Dendritic cell treated with granulocyte-macrophage colony-stimulating factor and Interleukin-4, amounts not matched to agents 40 ng/mL and 50 ng/mL, for 4 days (primary cell): ENCODE measurements at regions of chr13 and their contacts with region 1.

Region 1: DNA sequence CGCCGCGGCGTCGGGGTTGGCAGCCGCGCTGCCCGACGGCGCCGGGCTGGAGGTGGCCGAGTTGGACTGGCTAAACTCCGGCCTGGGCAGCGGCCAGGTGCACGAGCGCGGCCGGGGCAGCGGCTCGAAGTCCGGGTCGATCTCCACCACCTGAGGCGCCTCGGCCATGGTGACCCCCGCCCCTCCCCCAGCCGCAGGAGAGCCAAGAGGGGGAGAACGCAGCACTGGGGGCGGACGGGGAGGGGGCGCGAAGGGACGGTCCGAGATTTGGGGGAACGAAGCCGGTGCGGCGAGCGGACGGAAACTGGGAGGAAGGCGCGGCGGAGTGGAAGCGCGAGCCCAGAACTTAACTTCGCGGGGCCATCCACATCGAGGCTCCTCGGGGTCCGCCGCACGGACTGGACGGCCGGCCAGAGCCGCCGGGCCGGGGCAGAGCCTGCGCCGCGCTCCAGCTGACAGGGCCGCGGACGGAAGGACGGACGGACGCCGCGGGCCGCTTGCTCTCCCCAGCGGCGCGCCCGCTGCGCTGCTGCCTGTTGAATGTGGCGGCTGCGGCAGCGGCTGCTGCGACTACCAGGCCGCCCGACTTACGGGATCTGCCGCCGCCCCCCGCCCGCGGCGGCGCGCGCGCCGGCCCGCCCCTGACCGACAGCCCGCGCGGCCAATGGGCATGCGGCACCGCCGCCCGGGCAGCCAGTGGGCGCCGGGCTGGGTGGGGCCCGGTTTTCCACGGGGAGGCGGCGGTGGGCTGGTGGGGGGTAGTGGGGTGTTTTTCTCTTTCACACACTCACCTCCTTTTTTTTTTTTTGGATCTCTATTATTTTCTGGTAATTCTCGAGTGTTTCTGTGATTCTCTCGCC is at the start of gene FOXO1:
- H3K4me3 Mint-ChIP-seq: peak within 1 kb of the TSS; percentile 96
- H3K27ac Mint-ChIP-seq: peak within 1 kb of the TSS; percentile 99
- H3K4me1 Mint-ChIP-seq: peaks cover 44% of the 10 kb centered on the region
- H3K27me3 Mint-ChIP-seq: no peaks in the 10 kb centered on the region

Region 2: GRCh38 chr13:40377783-40378182 is 288.5 kb before region 1 on chr13:
- intact Hi-C with region 1: no loop called
- H3K4me3 Mint-ChIP-seq: no peak overlapping the region
- H3K27ac Mint-ChIP-seq: no peak overlapping the region
- H3K4me1 Mint-ChIP-seq: peaks cover 22% of the 10 kb centered on the region
- H3K27me3 Mint-ChIP-seq: peaks cover 22% of the 10 kb centered on the region

Region 3: DNA sequence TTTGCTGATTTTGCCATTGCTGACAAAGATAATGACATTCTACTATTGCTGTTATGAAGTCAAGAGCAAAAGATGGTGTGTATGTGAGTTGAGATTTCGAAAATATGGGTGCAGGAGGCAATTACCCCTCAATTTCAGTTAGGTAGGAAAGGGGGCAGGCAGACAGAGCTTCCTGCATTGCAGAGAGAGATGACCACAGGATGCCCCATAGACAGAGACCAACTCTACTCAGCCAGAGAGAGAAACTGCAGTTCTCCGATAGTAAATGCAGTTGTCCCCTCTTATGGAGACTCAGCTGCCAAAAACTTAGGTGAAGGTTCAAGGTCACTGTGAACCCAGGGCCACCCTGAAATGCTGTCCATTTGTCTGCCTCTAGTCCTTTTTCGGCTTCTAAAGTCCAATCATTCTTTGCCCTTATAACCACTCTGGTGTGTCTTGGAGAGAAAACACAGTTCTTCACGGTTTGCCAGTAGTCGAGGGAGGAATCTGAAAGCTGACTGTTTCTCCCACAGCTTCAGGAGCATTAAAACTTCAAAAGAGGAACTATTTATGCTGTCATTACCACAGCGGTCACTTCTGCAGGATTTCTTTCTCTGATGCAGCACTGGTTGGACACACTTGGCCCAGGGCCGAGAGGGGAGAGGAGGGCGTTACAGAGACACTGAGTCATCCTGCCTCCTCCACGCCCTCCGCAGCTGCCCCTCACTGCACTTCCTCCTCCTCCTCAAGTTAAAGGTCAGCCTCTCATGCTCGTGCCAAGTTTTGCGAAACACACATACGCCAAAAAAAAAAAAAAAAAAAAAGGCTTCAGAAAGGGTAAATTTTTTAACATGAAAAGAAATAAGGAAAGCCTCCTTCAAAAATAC is 264.1 kb before region 1 on chr13:
- intact Hi-C with region 1: loop called (anchors 2 kb)
- H3K4me3 Mint-ChIP-seq: no peak overlapping the region
- H3K27ac Mint-ChIP-seq: peak overlapping the region; percentile 21
- H3K4me1 Mint-ChIP-seq: peaks cover 72% of the 10 kb centered on the region
- H3K27me3 Mint-ChIP-seq: no peaks in the 10 kb centered on the region

Region 4: DNA sequence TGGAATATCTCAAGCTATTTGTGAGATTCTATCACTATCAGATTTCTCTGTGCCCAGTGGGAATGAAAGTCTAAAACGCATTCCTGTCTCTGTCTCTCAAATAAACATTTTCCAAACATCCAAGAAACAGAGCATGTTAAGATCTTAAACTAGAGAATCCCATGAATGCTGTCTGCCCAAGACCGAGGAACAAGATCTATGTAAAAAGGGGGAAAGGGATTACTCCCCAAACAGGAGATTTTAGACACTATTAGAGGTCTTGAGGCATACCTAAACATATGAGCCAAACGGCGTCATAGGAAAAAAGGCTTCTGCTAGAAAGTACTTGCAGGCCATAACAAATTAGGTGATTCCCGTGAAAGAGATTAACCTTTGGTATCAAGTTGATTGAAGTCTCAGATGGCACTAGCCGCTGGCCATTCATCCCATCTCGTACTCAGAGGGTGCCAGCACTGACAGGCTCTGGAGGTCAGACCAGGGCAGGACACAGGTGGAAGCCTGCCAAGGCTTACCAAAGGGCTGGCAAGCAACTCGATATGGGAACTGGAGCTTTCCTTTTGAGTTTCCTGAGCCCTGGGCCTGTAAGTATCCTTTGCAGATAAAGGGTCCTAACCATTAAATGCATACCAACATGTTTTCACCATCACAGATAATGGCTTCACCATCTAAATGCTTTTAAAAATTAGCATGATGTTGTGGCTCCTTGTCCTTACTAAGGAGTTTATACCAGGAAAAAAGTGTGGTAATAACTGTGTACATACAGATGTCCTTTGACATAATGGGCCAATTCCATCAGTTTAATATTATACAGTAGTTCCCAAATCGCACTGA is 225.1 kb before region 1 on chr13:
- intact Hi-C with region 1: no loop called
- H3K4me3 Mint-ChIP-seq: no peak overlapping the region
- H3K27ac Mint-ChIP-seq: no peak overlapping the region
- H3K4me1 Mint-ChIP-seq: peaks cover 35% of the 10 kb centered on the region
- H3K27me3 Mint-ChIP-seq: no peaks in the 10 kb centered on the region

Region 5: DNA sequence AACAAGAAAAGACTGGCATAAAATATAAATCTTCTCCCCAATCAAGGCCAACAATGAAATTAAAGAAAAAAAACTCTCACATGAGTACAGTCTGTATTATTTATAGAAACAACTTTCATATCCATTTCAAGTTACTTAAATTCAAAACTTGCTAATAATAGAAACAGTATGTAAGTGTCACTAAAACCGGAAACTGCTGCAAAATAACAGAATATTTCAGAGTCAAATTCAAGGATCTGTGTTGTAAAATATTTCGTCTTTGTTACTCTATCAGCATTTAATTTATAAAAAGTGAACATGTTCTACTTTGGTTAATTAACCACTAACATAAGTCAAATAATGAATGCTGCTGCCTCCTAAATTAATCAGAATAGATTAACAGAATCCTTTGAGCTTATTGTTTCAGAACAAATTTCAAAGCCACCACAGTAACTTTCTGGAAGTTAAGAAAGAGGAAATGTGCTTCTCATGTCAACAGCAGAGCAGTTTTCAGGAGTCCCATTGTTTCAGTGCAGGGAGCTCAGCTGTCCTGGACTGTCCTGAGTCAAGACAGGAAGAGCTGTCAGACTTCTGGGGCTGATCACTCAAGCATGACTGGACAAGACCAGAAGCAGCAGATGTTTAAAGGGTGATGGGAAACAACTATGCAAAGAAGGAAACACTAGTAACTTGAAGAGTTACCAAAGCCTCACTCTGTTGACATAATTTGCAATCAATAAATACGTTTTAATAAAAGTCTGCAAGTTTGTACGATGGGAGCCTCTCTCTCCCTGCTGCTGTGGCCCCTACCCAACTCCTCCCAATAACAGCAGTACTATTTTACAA is 76.8 kb before region 1 on chr13:
- intact Hi-C with region 1: loop called (anchors 2 kb)
- H3K4me3 Mint-ChIP-seq: peak overlapping the region; percentile 20
- H3K27ac Mint-ChIP-seq: peak overlapping the region; percentile 35
- H3K4me1 Mint-ChIP-seq: peaks cover 81% of the 10 kb centered on the region
- H3K27me3 Mint-ChIP-seq: no peaks in the 10 kb centered on the region

Region 6: DNA sequence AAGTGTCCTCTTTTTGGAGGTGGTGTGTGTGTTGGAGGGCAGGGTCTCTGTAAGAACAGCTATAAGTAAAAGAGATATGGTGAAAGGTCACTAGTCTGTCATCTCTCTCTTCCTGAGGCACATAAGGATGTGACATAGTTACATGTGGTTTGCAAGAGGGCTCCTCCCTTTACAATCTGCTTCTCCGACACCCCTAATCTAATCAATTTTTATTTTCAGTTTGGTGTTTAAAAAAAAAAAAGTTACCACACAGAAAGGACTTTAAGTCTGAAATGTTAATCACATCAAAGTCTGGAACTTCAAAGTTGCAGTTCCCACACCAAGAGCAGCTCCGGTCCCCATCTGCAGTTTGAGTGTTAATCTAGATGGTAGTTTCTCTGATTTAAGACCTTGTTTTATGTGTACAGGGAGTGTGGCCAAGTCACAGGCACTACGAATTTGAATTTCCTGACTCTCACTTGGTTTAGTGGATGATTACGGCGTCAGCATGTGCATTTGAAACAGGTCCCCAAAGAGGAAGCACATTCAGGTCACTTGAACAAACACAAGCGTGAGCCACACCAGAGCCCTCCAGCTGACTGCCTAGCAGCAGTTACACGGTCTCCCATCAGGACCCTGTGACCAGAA is 53.0 kb before region 1 on chr13:
- intact Hi-C with region 1: loop called (anchors 10 kb)
- H3K4me3 Mint-ChIP-seq: peak overlapping the region; percentile 14
- H3K27ac Mint-ChIP-seq: peak overlapping the region; percentile 28
- H3K4me1 Mint-ChIP-seq: peaks cover 49% of the 10 kb centered on the region
- H3K27me3 Mint-ChIP-seq: no peaks in the 10 kb centered on the region

Region 7: GRCh38 chr13:40629678-40630384 is 36.4 kb before region 1 on chr13:
- intact Hi-C with region 1: loop called (anchors 2 kb)
- H3K4me3 Mint-ChIP-seq: peak overlapping the region; percentile 32
- H3K27ac Mint-ChIP-seq: peak overlapping the region; percentile 87
- H3K4me1 Mint-ChIP-seq: peaks cover 63% of the 10 kb centered on the region
- H3K27me3 Mint-ChIP-seq: no peaks in the 10 kb centered on the region

Region 8: GRCh38 chr13:40639221-40639681 is 27.0 kb before region 1 on chr13:
- intact Hi-C with region 1: loop called (anchors 2 kb)
- H3K4me3 Mint-ChIP-seq: no peak overlapping the region
- H3K27ac Mint-ChIP-seq: peak overlapping the region; percentile 86
- H3K4me1 Mint-ChIP-seq: peaks cover 61% of the 10 kb centered on the region
- H3K27me3 Mint-ChIP-seq: no peaks in the 10 kb centered on the region

Region 9: DNA sequence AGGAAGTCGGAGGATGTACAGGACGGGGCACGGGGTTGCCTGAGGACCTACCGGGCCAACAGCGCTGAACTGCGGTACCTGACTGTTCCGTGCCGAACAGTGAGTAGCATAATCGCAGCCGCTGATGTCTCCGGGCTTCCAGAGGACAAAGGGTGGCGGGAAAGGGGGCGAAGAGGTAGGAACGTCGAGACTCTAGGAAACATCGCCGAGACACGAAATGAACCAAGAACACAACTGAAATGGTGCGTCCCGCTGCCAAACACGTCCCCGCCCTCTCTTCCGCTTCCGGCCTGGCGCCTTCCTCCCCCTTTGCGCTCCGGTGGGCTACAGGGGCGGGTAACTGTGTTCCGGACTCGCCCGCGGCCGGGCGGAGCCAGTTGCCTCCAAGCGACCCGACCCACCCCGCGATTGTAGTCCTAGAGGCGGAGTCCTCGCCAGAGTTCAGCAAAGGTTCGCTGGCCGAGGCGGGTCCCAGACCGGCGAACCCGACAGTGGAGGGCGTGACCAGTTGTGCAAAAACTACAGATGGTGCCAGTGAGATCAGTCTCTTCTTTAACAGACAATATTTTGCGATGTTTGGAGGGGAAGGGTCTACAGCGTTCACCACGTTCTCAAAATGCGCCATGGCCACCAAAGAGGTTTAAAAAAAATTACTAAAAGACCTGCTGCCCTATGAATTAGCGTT is 104.8 kb after region 1 on chr13 and contains the start of gene MRPS31:
- intact Hi-C with region 1: loop called (anchors 10 kb)
- H3K4me3 Mint-ChIP-seq: peak within 1 kb of the TSS; percentile 95
- H3K27ac Mint-ChIP-seq: peak within 1 kb of the TSS; percentile 95
- H3K4me1 Mint-ChIP-seq: peaks cover 13% of the 10 kb centered on the region
- H3K27me3 Mint-ChIP-seq: no peaks in the 10 kb centered on the region